Activated T-helper 2 cell treated with anti-CD3 and anti-CD28 coated beads, Interferon-gamma antibody, Interleukin-2, Interleukin-4, amounts not matched to agents 10 μg/mL and 5 μg/mL and 100 μg/mL, durations not matched to agents 14 hours and 24 hours and 36 hours (primary cell): ENCODE measurements at regions of chr18 and their contacts with region 1.

Region 1: GRCh38 chr18:62844850-62845643 is 129.7 kb downstream of the PHLPP1 start:
- DNase-seq: peak; percentile 20
- H3K4me3 Mint-ChIP-seq: peak overlapping the region; percentile 70
- H3K27ac Mint-ChIP-seq: peak overlapping the region; percentile 90
- H3K4me1 Mint-ChIP-seq: peaks cover 54% of the 10 kb centered on the region
- H3K27me3 Mint-ChIP-seq: no peaks in the 10 kb centered on the region

Region 2: GRCh38 chr18:62324917-62325805 is 519.9 kb before region 1 on chr18 and contains the start of gene TNFRSF11A:
- intact Hi-C with region 1: loop called (anchors 10 kb)
- DNase-seq: peak; percentile 62
- H3K4me3 Mint-ChIP-seq: peak within 1 kb of the TSS; percentile 92
- H3K27ac Mint-ChIP-seq: peak within 1 kb of the TSS; percentile 82
- H3K4me1 Mint-ChIP-seq: peaks cover 56% of the 10 kb centered on the region
- H3K27me3 Mint-ChIP-seq: peaks cover 32% of the 10 kb centered on the region
- total RNA-seq, gene TNFRSF11A: 38.2 and 43.0 TPM in 2 replicates

Region 3: GRCh38 chr18:62464266-62464665 is 380.8 kb before region 1 on chr18:
- intact Hi-C with region 1: no loop called
- DNase-seq: no peak
- H3K4me3 Mint-ChIP-seq: no peak overlapping the region
- H3K27ac Mint-ChIP-seq: no peak overlapping the region
- H3K4me1 Mint-ChIP-seq: no peaks in the 10 kb centered on the region
- H3K27me3 Mint-ChIP-seq: peaks cover 6% of the 10 kb centered on the region

Region 4: GRCh38 chr18:62522504-62523254 is 322.4 kb before region 1 on chr18 and contains the start of gene ZCCHC2:
- intact Hi-C with region 1: loop called (anchors 5 kb)
- DNase-seq: peak; percentile 99
- H3K4me3 Mint-ChIP-seq: peak within 1 kb of the TSS; percentile 95
- H3K27ac Mint-ChIP-seq: peak within 1 kb of the TSS; percentile 88
- H3K4me1 Mint-ChIP-seq: peaks cover 29% of the 10 kb centered on the region
- H3K27me3 Mint-ChIP-seq: no peaks in the 10 kb centered on the region
- total RNA-seq, gene ZCCHC2: 43.8 and 48.6 TPM in 2 replicates

Region 5: GRCh38 chr18:62771494-62772270 is 73.4 kb before region 1 on chr18:
- intact Hi-C with region 1: loop called (anchors 1 kb)
- DNase-seq: no peak
- H3K4me3 Mint-ChIP-seq: peak overlapping the region; percentile 24
- H3K27ac Mint-ChIP-seq: peak overlapping the region; percentile 87
- H3K4me1 Mint-ChIP-seq: peaks cover 58% of the 10 kb centered on the region
- H3K27me3 Mint-ChIP-seq: no peaks in the 10 kb centered on the region

Region 6: DNA sequence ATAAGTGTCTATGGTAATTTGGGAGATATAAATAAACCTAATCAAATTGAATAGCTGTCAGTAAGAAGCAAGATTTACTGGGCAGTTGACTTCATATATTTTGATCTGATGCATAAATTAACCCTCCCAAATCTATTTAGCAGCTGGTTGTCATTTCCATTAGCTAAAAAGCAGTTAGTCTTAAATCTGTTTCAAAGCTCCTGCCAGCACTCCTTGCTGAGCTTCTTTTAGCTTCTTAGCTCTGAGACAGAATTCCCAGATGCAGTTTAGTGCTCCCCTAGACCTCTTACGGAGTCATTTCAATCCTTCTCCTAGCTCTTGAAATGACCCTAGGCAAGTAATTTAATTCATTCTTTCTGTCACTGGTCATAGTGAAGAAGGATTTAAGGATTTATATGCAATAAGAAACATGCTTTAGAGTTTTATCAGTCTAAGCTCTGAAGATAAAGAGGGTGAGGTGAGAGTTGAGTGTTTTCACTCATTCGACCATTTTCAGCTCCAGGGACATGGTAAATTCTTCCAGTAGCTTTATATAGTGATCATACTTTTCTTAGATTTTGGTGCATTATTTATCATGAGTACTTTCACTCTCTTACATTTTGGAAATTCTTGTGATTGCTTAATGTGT is 30.8 kb before region 1 on chr18:
- intact Hi-C with region 1: no loop called
- DNase-seq: no peak
- H3K4me3 Mint-ChIP-seq: no peak overlapping the region
- H3K27ac Mint-ChIP-seq: no peak overlapping the region
- H3K4me1 Mint-ChIP-seq: peaks cover 20% of the 10 kb centered on the region
- H3K27me3 Mint-ChIP-seq: no peaks in the 10 kb centered on the region

Region 7: DNA sequence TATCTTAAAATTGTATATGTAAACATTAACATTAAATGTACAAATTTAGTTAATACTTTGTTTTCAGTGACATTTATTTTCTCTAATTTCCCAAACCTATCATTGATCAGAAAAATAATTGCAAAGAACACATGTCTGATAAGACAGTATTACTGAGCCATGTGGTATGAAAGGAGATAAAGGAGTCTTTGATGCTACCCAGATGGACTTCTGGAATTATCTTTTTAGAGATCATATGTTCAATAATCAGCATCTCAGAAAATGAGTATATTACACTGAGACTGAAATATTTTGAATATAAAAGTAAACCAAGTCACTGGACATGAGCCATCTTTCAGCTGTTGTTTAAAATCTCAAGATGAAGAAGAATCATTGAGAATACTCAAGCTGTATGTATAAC is 23.6 kb after region 1 on chr18:
- intact Hi-C with region 1: loop called (anchors 2 kb)
- DNase-seq: no peak
- H3K4me3 Mint-ChIP-seq: no peak overlapping the region
- H3K27ac Mint-ChIP-seq: peak overlapping the region; percentile 90
- H3K4me1 Mint-ChIP-seq: peaks cover 36% of the 10 kb centered on the region
- H3K27me3 Mint-ChIP-seq: no peaks in the 10 kb centered on the region

Region 8: DNA sequence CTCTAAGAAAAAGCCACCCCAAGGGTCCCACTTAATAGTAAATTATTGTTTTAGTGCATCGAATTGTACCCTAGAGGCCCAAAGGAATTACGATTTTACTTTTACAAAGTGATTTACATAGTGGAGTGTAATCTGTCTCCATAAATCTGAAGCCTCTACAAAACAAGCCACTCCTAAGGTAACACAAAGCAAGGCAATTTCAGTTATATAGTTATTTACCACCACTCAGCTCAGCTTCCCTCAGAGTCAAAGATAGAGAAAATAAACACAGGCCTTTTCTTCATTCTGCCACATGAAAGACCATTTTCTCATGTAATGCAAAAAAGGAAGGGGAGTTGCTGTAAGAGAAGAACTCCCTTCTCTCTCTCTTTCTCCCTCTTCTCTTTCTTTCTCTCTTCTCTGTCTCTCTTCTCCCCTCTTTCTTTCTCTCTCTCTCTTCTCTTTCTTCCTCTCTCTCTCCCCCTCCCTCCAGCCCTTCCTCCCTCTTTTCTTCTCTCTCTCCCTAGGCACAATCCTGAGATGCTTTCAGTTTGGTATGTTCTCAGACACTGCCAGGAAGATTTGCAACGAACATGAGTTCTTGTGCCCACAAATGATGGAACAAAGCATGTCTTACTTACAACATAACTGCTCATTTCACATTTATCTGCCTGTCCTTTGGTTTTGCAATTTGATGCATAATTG is 210.0 kb after region 1 on chr18:
- intact Hi-C with region 1: no loop called
- DNase-seq: no peak
- H3K4me3 Mint-ChIP-seq: no peak overlapping the region
- H3K27ac Mint-ChIP-seq: no peak overlapping the region
- H3K4me1 Mint-ChIP-seq: peaks cover 8% of the 10 kb centered on the region
- H3K27me3 Mint-ChIP-seq: peaks cover 15% of the 10 kb centered on the region

Region 9: DNA sequence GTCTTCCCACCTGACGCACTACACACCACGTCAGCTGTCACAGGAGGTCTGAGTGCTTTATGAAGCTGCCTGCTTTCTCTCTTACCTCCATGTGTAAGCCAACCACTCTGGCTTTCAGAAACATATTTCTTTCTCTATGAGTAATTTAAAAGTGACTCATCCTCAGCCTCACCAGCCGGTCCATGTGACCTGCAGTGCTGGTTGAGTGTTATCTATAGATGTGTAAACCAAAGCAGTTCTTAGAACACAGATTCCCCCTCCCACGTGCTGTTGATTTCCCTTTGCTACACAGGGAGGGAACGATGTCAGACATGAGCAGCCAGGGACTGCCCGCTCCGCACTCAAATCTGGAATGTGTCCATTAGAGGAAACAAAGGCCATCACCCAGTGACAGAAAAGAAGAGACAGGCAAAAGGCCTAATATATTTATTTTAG is 316.7 kb after region 1 on chr18:
- intact Hi-C with region 1: loop called (anchors 1 kb)
- DNase-seq: peak; percentile 80
- H3K4me3 Mint-ChIP-seq: peak overlapping the region; percentile 71
- H3K27ac Mint-ChIP-seq: peak overlapping the region; percentile 99
- H3K4me1 Mint-ChIP-seq: peaks cover 86% of the 10 kb centered on the region
- H3K27me3 Mint-ChIP-seq: no peaks in the 10 kb centered on the region